ENCODE measurements at regions of chr6 and their contacts with region 1.

Region 1: DNA sequence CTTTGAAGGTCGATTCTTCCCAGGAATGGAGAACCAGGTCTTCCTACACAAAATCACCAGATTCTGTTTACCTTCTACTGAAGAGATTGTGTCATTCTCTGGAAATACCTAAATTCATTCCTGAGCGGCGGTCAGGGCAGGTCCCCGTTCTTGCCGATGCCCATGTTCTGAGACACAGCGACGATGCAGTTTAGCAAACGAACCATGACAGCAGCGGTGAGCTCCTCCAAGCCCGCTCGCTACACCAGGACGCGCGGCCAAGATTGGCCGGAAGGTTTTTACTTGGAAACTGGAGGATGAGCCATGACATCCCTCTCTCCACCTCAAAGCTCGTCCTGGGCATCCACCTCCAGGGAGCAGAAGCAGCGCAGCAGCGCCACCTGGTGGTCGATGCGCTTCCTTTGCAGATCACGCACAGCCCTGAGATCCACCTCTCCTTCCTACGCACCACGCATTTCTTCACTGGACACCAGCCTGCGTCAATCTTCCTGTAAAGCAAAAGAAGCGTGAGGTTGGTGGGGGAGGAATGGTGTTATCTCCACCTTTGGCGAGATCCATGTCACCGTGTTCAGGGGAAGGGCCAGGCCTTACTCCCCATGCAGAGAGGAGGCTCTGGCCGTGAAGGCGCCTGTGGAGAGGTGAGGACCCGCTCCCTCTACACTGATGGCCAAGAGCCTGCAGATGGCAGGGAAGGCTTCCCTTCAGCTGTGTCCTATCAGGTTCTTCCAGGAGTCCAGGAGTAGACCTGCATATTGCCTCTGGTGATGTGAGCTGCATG is 9.9 kb upstream of the HLA-B start:
- DNase-seq: peak; percentile 94
- ATAC-seq: peak; percentile 98
- H3K4me3 ChIP-seq: peak overlapping the region; percentile 17 to 67 (median 56)
- H3K4me3 Mint-ChIP-seq: peak overlapping the region; percentile 90
- H3K27ac ChIP-seq: no peak overlapping the region
- H3K27ac Mint-ChIP-seq: peak overlapping the region; percentile 56
- H3K4me1 ChIP-seq: peaks cover 9 to 10% of the 10 kb centered on the region in 2 donors
- H3K4me1 Mint-ChIP-seq: peaks cover 8% of the 10 kb centered on the region
- H3K27me3 ChIP-seq: peaks cover 0 to 17% (median 10%) of the 10 kb centered on the region in 4 experiments
- H3K27me3 Mint-ChIP-seq: peaks cover 31% of the 10 kb centered on the region
- CTCF ChIP-seq: peak; percentile 88

Region 2: DNA sequence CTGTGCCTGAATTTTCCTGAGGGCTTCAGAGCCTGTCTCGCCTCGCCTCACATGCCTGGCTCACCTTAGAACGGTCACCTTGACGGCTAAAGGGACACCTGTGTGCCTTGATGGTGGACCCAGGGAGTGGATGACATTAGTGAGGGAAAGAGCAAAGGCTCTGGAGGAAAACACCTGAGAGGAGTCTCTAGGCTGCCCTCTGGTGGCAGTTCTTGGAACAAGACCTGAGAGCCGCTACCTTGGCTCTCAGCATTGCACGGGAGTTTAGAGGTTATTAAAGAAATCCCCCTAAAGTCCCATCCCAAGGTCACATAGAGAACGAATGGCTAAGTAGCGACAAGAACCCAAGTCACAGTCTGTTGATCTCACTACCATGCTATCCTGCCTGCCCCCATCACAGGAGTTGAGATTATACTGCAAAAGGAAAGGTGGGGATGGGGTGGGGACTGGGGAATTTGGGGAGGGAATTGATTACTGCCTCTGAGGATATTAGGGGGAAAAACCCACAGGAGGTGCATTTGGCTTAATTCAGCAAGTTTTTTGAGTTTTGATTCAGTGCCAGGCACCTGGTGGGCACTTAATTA is 238.7 kb before region 1 on chr6:
- CTCF ChIA-PET with region 1: interaction called, 32 read pairs
- POLR2A ChIA-PET with region 1: no interaction called
- intact Hi-C with region 1: no loop called
- DNase-seq: peak; percentile 79
- ATAC-seq: peak; percentile 75
- H3K4me3 ChIP-seq: no peak overlapping the region
- H3K4me3 Mint-ChIP-seq: no peak overlapping the region
- H3K27ac ChIP-seq: no peak overlapping the region
- H3K27ac Mint-ChIP-seq: no peak overlapping the region
- H3K4me1 ChIP-seq: peaks cover 0 to 3% of the 10 kb centered on the region in 2 donors
- H3K4me1 Mint-ChIP-seq: peaks cover 4% of the 10 kb centered on the region
- H3K27me3 ChIP-seq: peaks cover 0 to 7% (median under 1%) of the 10 kb centered on the region in 4 experiments
- H3K27me3 Mint-ChIP-seq: peaks cover 19% of the 10 kb centered on the region
- CTCF ChIP-seq: peak; percentile 91

Region 3: GRCh38 chr6:31143148-31143547 is 223.7 kb before region 1 on chr6:
- CTCF ChIA-PET with region 1: interaction called, 58 read pairs
- POLR2A ChIA-PET with region 1: no interaction called
- intact Hi-C with region 1: no loop called
- DNase-seq: no peak
- ATAC-seq: no peak
- H3K4me3 ChIP-seq: no peak overlapping the region
- H3K4me3 Mint-ChIP-seq: no peak overlapping the region
- H3K27ac ChIP-seq: no peak overlapping the region
- H3K27ac Mint-ChIP-seq: no peak overlapping the region
- H3K4me1 ChIP-seq: no peaks in the 10 kb centered on the region
- H3K4me1 Mint-ChIP-seq: peaks cover 2% of the 10 kb centered on the region
- H3K27me3 ChIP-seq: no peaks in the 10 kb centered on the region
- H3K27me3 Mint-ChIP-seq: no peaks in the 10 kb centered on the region
- CTCF ChIP-seq: no peak

Region 4: GRCh38 chr6:31197559-31198305 is 169.2 kb before region 1 on chr6:
- CTCF ChIA-PET with region 1: interaction called, 210 read pairs
- POLR2A ChIA-PET with region 1: interaction called, 38 read pairs
- intact Hi-C with region 1: loop called (anchors 1 kb)
- DNase-seq: peak; percentile 95
- ATAC-seq: peak; percentile 77
- H3K4me3 ChIP-seq: peak overlapping the region; percentile 70 to 99 (median 90)
- H3K4me3 Mint-ChIP-seq: peak overlapping the region; percentile 82
- H3K27ac ChIP-seq: peak overlapping the region; percentile 97 to 100
- H3K27ac Mint-ChIP-seq: peak overlapping the region; percentile 100
- H3K4me1 ChIP-seq: peaks cover 11 to 47% of the 10 kb centered on the region in 2 donors
- H3K4me1 Mint-ChIP-seq: peaks cover 50% of the 10 kb centered on the region
- H3K27me3 ChIP-seq: no peaks in the 10 kb centered on the region
- H3K27me3 Mint-ChIP-seq: no peaks in the 10 kb centered on the region
- CTCF ChIP-seq: no peak

Region 5: DNA sequence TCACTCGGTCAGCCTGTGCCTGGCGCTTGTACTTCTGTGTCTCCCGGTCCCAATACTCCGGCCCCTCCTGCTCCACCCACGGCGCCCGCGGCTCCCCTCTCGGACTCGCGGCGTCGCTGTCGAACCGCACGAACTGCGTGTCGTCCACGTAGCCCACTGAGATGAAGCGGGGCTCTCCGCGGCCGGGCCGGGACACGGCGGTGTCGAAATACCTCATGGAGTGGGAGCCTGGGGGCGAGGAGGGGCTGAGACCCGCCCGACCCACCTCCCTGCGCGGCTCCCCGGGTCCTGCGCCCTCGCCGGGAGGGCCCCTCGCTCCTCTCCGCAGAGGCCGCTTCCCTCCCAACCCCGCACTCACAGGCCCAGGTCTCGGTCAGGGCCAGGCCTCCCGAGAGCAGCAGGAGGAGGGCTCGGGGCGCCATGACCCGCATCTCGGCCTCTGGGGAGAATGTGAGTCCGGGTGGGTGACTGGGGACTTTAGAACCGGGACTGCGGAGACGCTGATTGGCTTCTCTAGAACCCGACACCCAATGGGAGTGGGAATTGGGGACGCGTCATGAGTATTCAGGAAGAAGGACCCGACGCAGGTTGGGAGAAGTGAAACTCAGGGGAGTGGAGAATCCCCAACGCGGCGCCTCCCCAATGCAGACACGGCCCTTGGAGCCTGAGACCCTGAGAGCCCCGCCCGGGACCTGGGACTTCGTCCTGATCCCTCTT is 95.1 kb before region 1 on chr6 and contains the start of gene HLA-C:
- CTCF ChIA-PET with region 1: interaction called, 15 read pairs
- POLR2A ChIA-PET with region 1: interaction called, 3 read pairs
- intact Hi-C with region 1: loop called (anchors 1 kb)
- DNase-seq: peak; percentile 98
- ATAC-seq: peak; percentile 88
- H3K4me3 ChIP-seq: peak within 1 kb of the TSS; percentile 72 to 94 (median 87)
- H3K4me3 Mint-ChIP-seq: peak within 1 kb of the TSS; percentile 98
- H3K27ac ChIP-seq: peak within 1 kb of the TSS; percentile 97 to 98
- H3K27ac Mint-ChIP-seq: peak within 1 kb of the TSS; percentile 100
- H3K4me1 ChIP-seq: peaks cover 33 to 46% of the 10 kb centered on the region in 2 donors
- H3K4me1 Mint-ChIP-seq: peaks cover 64% of the 10 kb centered on the region
- H3K27me3 ChIP-seq: no peaks in the 10 kb centered on the region
- H3K27me3 Mint-ChIP-seq: no peaks in the 10 kb centered on the region
- CTCF ChIP-seq: no peak
- total RNA-seq, gene HLA-C: 972 and 998 TPM in 2 replicates

Region 6: GRCh38 chr6:31383149-31383548 is 16.3 kb after region 1 on chr6:
- CTCF ChIA-PET with region 1: interaction called, 60 read pairs
- POLR2A ChIA-PET with region 1: no interaction called
- intact Hi-C with region 1: no loop called
- DNase-seq: no peak
- ATAC-seq: no peak
- H3K4me3 ChIP-seq: no peak overlapping the region
- H3K4me3 Mint-ChIP-seq: no peak overlapping the region
- H3K27ac ChIP-seq: no peak overlapping the region
- H3K27ac Mint-ChIP-seq: no peak overlapping the region
- H3K4me1 ChIP-seq: no peaks in the 10 kb centered on the region
- H3K4me1 Mint-ChIP-seq: no peaks in the 10 kb centered on the region
- H3K27me3 ChIP-seq: peaks cover 0 to 10% (median 4%) of the 10 kb centered on the region in 4 experiments
- H3K27me3 Mint-ChIP-seq: peaks cover 14% of the 10 kb centered on the region
- CTCF ChIP-seq: no peak

Region 7: GRCh38 chr6:31513456-31514165 is 146.7 kb after region 1 on chr6:
- CTCF ChIA-PET with region 1: no interaction called
- POLR2A ChIA-PET with region 1: no interaction called
- intact Hi-C with region 1: no loop called
- DNase-seq: no peak
- ATAC-seq: no peak
- H3K4me3 ChIP-seq: no peak overlapping the region
- H3K4me3 Mint-ChIP-seq: no peak overlapping the region
- H3K27ac ChIP-seq: no peak overlapping the region
- H3K27ac Mint-ChIP-seq: no peak overlapping the region
- H3K4me1 ChIP-seq: no peaks in the 10 kb centered on the region
- H3K4me1 Mint-ChIP-seq: no peaks in the 10 kb centered on the region
- H3K27me3 ChIP-seq: peaks cover 0 to 2% (median 0%) of the 10 kb centered on the region in 4 experiments
- H3K27me3 Mint-ChIP-seq: no peaks in the 10 kb centered on the region
- CTCF ChIP-seq: no peak

Measured in B cell (primary cell).